ENCODE measurements at regions of chr3 and their contacts with region 1.

Region 1: GRCh38 chr3:46866720-46867549 is 3.7 kb upstream of the MYL3 start:
- DNase-seq: peak; percentile 80 to 93 (median 86)
- ATAC-seq: peak in 3 of 4 donors; percentile 8 to 32 (median 18)
- H3K4me3 ChIP-seq: no peak overlapping the region
- H3K27ac ChIP-seq: peak overlapping the region; percentile 63 to 100 (median 86)
- H3K4me1 ChIP-seq: peaks cover 13 to 78% (median 38%) of the 10 kb centered on the region in 12 donors
- H3K27me3 ChIP-seq: no peaks in the 10 kb centered on the region
- CTCF ChIP-seq: peak; percentile 83 to 93 (median 88)
- POLR2A ChIP-seq: no peak

Region 2: GRCh38 chr3:46895204-46895660 is 28.3 kb after region 1 on chr3:
- intact Hi-C with region 1: loop called in 9 of 10 experiments (anchors 1 to 2 kb)
- DNase-seq: peak; percentile 68 to 87 (median 78)
- ATAC-seq: peak in 3 of 4 donors; percentile 22 to 63 (median 52)
- H3K4me3 ChIP-seq: no peak overlapping the region
- H3K27ac ChIP-seq: no peak overlapping the region
- H3K4me1 ChIP-seq: peaks cover 0 to 49% (median 26%) of the 10 kb centered on the region in 12 donors
- H3K27me3 ChIP-seq: peaks cover 0 to 22% (median 0%) of the 10 kb centered on the region in 9 donors
- CTCF ChIP-seq: peak; percentile 87 to 96 (median 91)
- POLR2A ChIP-seq: no peak

Region 3: GRCh38 chr3:46909535-46910442 is 42.9 kb after region 1 on chr3:
- intact Hi-C with region 1: loop called in 9 of 10 experiments (anchors 1 to 5 kb)
- DNase-seq: peak; percentile 82 to 91 (median 88)
- ATAC-seq: peak; percentile 68 to 88 (median 82)
- H3K4me3 ChIP-seq: no peak overlapping the region
- H3K27ac ChIP-seq: no peak overlapping the region
- H3K4me1 ChIP-seq: peaks cover 0 to 33% (median 24%) of the 10 kb centered on the region in 12 donors
- H3K27me3 ChIP-seq: no peaks in the 10 kb centered on the region
- CTCF ChIP-seq: peak; percentile 73 to 93 (median 88)
- POLR2A ChIP-seq: no peak

Region 4: DNA sequence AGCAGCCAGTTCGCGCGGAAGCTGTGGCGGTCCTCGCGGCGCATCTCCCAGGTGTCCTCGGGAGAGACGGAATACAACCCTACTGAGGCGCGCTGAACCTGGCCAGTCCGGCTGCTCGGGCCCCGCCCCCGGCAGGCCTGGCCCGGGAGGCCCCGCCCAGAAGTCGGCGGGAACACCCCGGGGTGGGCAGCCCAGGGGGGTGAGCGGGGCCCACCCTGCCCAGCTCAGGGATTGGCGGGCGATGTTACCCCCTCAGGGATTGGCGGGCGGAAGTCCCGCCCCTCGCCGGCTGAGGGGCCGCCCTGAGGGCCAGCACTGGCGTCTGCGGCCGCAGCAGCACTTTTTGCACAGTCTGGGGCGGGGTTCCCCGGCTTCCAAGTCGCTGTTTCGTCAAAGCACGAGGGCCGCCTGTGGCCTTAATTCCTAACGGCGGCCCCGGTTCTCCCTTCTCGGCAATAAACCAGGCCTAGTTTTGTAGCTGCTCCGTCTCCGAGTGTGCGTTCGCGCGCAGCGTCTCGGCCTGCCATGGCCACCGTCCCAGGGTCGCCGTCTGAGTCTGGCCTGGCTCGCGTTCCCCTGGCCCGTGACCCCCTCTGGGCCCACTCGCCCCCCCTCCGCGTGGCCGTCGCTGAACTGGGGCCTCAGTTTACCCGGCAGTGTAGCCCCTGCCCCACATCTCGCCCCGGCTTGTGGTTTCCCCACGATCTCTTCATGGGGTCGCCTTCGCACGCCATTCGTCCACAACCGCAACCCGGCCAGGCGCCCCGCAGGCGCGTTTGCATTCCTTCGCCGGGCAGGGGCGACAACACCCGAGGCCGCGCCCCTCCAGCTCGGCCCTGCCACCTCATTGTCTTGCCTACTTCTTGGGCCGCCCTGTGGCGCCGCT is 142.5 kb after region 1 on chr3:
- intact Hi-C with region 1: loop called in 1 of 10 experiments (anchors 5 kb)
- DNase-seq: peak; percentile 92 to 94 (median 94)
- ATAC-seq: peak; percentile 94 to 97 (median 96)
- H3K4me3 ChIP-seq: peak overlapping the region; percentile 44 to 82 (median 63)
- H3K27ac ChIP-seq: peak overlapping the region; percentile 73 to 92 (median 86)
- H3K4me1 ChIP-seq: peaks cover 0 to 22% (median 7%) of the 10 kb centered on the region in 12 donors
- H3K27me3 ChIP-seq: no peaks in the 10 kb centered on the region
- CTCF ChIP-seq: no peak
- POLR2A ChIP-seq: peak; percentile 79 to 92